HepG2 (cell line): ENCODE measurements at regions of chr10 and their contacts with region 1.

Region 1: DNA sequence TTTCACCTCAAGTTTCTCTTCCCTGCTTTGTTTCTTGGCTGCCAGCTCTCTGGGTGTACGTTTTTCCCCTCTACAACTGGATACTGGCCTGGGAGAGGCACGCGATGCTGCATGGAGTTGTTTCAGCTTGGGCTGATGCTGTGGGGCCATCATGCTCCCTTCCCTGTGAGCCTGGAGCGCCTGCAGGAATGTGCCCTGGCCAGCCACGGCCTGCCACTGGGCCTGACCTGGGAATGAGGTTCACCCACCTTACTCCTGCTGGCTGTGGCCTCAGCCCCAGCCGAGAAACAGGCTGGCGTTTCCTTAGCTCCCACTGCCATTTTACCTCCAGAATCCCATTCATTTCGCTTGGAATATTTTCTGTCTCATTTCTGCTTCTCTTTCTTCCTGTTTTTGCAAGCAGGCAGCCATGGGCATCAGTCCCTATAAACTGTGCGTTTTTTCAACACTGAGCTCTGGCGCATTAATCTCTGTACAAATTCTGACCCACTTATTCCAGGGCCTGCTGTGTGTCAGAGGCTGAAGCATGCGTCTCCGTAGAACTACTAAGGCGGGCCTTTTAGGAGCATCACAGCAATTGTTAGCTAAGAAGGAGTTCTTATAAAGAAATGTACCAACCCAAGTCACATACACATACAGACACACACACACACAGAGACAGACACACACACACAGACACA is 57.9 kb downstream of the GATA3 start:
- DNase-seq: no peak
- ATAC-seq: no peak
- H3K4me3 ChIP-seq: no peak overlapping the region
- H3K27ac ChIP-seq: no peak overlapping the region
- H3K4me1 ChIP-seq: no peaks in the 10 kb centered on the region
- H3K27me3 ChIP-seq: peaks cover 0 to 16% of the 10 kb centered on the region in 2 experiments; a peak in 1 of 5 replicates
- CTCF ChIP-seq: no peak
- EP300 ChIP-seq: no peak
- POLR2A ChIP-seq: no peak
- RAD21 ChIP-seq: no peak

Region 2: DNA sequence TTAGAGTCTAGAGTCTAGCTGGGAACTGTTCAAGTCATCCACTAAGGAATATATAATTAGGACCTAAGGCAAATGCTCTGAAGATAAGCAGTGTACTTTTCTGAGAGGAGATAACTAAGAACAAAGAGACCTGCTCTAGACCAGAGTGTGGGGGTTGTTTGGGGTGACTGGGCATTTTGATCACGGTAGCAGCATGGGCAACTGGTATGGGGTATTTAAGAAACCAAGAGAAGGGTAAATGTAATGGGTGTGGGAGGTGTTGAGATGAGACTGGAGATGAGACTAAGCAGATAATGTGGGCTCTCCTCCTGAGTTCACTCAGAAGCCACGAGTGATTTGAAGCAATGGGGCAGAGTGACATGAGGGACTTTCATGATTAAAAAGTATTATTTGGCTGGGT is 1025.0 kb after region 1 on chr10:
- CTCF ChIA-PET with region 1: no interaction called
- POLR2A ChIA-PET with region 1: no interaction called
- in situ Hi-C with region 1: no loop called
- intact Hi-C with region 1: loop called (anchors 5 kb)
- DNase-seq: no peak
- ATAC-seq: no peak
- H3K4me3 ChIP-seq: no peak overlapping the region
- H3K27ac ChIP-seq: no peak overlapping the region
- H3K4me1 ChIP-seq: no peaks in the 10 kb centered on the region
- H3K27me3 ChIP-seq: no peaks in the 10 kb centered on the region; a peak in 1 of 5 replicates
- CTCF ChIP-seq: no peak
- EP300 ChIP-seq: no peak
- POLR2A ChIP-seq: no peak
- RAD21 ChIP-seq: no peak